ENCODE measurements at regions of chr1 and their contacts with region 1.

Region 1: GRCh38 chr1:112637254-112638116 is 17.9 kb downstream of the CAPZA1 start:
- DNase-seq: peak; percentile 37
- ATAC-seq: peak; percentile 72
- H3K4me3 ChIP-seq: no peak overlapping the region
- H3K27ac ChIP-seq: no peak overlapping the region
- H3K4me1 ChIP-seq: peaks cover 2% of the 10 kb centered on the region
- H3K27me3 ChIP-seq: no peaks in the 10 kb centered on the region
- CTCF ChIP-seq: no peak
- POLR2A ChIP-seq: no peak
- RAD21 ChIP-seq: no peak

Region 2: GRCh38 chr1:112651205-112651604 is 13.7 kb after region 1 on chr1:
- CTCF ChIA-PET with region 1: interaction called, 3 read pairs
- POLR2A ChIA-PET with region 1: interaction called, 10 read pairs
- dilution Hi-C with region 1: no loop called
- in situ Hi-C with region 1: no loop called
- intact Hi-C with region 1: no loop called
- DNase-seq: peak; percentile 16
- ATAC-seq: no peak
- H3K4me3 ChIP-seq: no peak overlapping the region
- H3K27ac ChIP-seq: no peak overlapping the region
- H3K4me1 ChIP-seq: 0 out of 2 replicates have a peak, but pooled peaks cover 2% of the 10 kb centered on the region
- H3K27me3 ChIP-seq: no peaks in the 10 kb centered on the region
- CTCF ChIP-seq: no peak
- POLR2A ChIP-seq: no peak
- RAD21 ChIP-seq: no peak

Region 3: GRCh38 chr1:112852242-112852641 is 214.8 kb after region 1 on chr1:
- CTCF ChIA-PET with region 1: no interaction called
- POLR2A ChIA-PET with region 1: no interaction called
- dilution Hi-C with region 1: no loop called
- in situ Hi-C with region 1: no loop called
- intact Hi-C with region 1: no loop called
- DNase-seq: no peak
- ATAC-seq: no peak
- H3K4me3 ChIP-seq: no peak overlapping the region
- H3K27ac ChIP-seq: no peak overlapping the region
- H3K4me1 ChIP-seq: no peaks in the 10 kb centered on the region
- H3K27me3 ChIP-seq: no peaks in the 10 kb centered on the region; the same call in 1 of the 2 replicates
- CTCF ChIP-seq: no peak
- POLR2A ChIP-seq: no peak
- RAD21 ChIP-seq: no peak

Region 4: GRCh38 chr1:112982853-112983536 is 345.5 kb after region 1 on chr1:
- CTCF ChIA-PET with region 1: no interaction called
- POLR2A ChIA-PET with region 1: no interaction called
- dilution Hi-C with region 1: no loop called
- in situ Hi-C with region 1: no loop called
- intact Hi-C with region 1: no loop called
- DNase-seq: no peak
- ATAC-seq: no peak
- H3K4me3 ChIP-seq: no peak overlapping the region
- H3K27ac ChIP-seq: no peak overlapping the region
- H3K4me1 ChIP-seq: no peaks in the 10 kb centered on the region
- H3K27me3 ChIP-seq: no peaks in the 10 kb centered on the region
- CTCF ChIP-seq: no peak
- POLR2A ChIP-seq: no peak
- RAD21 ChIP-seq: no peak

Measured in IMR-90 (cell line).